Endothelial cell of umbilical vein (primary cell): ENCODE measurements at regions of chr13 and their contacts with region 1.

Region 1: DNA sequence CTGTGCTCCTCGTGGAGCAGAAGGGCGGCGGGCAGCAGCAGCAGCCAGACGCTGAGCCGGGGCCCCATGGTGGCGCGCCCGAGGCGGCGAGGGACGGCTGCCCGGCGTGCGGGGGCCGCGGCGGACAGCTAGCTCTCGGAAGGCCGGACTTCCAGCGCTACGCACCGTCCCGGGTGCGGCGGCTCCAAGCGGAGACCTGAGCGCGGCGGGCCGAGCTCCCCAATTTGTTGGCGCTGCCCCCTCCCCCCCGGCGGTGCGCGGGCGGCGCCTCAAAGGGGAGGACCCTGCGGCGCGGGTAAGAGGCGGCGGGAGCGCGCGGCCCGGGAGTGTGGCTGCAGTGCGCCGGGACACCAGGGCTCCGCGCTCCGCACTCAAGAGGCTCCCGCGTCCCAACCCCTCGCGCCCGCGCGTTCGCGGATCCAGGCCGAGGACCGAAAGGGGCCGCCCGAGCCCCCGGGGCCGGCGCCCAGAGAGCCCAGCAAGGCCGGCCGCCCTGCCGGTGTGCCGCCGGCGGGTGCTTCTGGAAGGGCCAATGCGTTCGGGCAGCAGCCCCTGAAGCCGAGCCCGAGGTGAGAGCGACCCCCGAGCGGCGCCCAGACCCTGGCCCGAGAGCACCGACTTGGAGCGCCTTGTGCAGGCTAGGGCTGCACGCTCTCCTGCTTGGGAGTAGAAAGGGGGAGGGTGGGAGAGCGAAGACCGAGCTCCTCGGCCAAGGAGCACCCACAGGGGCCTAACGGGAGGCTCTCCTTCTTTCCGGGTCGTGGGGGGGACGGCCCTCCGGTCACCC is at the starts of genes COL4A1 and COL4A2:
- DNase-seq: peak; percentile 66
- H3K4me3 ChIP-seq: peak within 1 kb of the TSS; percentile 64 to 83 (median 71)
- H3K27ac ChIP-seq: peak within 1 kb of the TSS; percentile 59
- H3K4me1 ChIP-seq: peaks cover 69% of the 10 kb centered on the region
- H3K27me3 ChIP-seq: no peaks in the 10 kb centered on the region
- CTCF ChIP-seq: no peak
- POLR2A ChIP-seq: peak; percentile 92
- total RNA-seq, gene COL4A1: 1,119 and 1,341 TPM in 2 replicates
- total RNA-seq, gene COL4A2: 792 and 935 TPM in 2 replicates

Region 2: DNA sequence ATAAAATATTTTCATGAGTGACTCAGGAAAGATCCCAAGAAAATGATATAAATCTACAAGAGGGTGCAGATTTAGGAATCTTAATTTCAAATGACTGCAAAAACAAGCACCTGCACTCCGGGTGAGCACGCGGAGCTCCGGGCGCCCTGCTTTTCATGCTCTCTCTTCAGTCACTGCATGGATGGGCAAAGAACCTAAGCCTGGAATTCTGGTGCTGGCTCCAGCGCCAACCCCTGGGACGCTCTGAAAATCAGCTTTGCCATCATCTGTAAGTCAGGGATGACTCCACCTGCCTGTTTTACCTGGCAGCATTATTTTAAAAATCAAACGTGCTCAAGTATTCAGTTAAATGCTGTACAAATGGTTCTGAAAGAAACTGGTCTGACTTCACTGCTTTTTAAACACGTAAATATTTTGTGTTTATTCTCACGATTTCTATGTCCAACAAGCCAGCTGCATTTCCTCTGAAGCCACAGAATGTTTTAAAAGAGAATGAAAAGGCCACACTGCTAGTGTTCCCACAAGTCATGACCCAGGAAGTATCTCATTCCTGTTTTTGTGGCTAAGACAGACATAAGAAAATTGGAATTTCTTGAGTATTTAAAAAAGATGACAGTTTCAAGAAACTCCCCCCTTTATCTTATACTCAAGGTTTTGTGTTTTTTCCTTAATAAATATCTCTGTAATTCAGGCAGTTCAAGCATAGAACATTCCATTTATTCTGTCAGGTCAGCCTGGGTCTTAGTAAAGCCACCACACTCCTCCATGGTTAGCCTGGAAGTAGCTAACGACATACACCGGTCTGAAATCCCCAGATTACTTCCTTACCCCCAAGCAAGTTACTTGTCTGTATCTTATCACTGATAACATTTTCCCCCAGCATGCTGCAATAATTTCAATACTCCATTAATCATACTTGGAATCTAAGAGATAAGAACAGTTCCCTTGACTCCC is 81.3 kb before region 1 on chr13:
- CTCF ChIA-PET with region 1: interaction called, 28 read pairs
- POLR2A ChIA-PET with region 1: no interaction called
- dilution Hi-C with region 1: no loop called
- intact Hi-C with region 1: loop called (anchors 1 kb)
- DNase-seq: peak; percentile 65
- H3K4me3 ChIP-seq: no peak overlapping the region
- H3K27ac ChIP-seq: peak overlapping the region; percentile 56
- H3K4me1 ChIP-seq: peaks cover 21% of the 10 kb centered on the region
- H3K27me3 ChIP-seq: no peaks in the 10 kb centered on the region
- CTCF ChIP-seq: no peak
- POLR2A ChIP-seq: no peak

Region 3: DNA sequence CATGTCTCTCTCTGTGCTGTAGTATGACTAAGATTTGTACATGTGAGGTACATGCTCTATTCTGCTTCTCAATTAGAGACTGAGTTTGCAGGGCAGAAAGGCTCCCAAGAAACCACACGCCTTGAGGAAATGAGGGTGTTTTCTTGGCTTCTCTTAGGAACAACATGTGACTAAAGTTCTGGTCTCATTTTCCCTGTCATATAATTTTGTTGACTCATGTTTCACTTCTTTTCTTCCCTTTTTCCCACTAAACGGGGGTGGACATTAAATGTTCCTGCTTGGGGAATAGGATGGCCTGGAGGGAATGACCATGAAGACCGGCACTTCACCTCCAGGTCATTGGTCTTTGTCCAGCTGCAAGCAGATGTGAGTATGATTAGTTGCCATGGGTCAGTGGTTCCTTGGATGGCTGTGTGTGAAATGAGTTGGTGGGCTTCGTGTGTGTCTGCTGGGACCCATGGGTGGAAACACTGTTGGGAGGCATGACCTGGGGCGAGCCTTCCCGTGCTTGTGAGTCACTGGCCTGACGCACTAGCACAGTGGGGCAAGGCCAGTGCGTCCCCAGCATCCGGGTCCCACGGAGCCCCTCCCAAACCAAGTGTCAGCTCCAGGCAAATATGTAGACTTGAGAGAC is 56.8 kb before region 1 on chr13:
- CTCF ChIA-PET with region 1: interaction called, 42 read pairs
- POLR2A ChIA-PET with region 1: interaction called, 4 read pairs
- dilution Hi-C with region 1: no loop called
- intact Hi-C with region 1: no loop called
- DNase-seq: peak; percentile 64
- H3K4me3 ChIP-seq: no peak overlapping the region
- H3K27ac ChIP-seq: peak overlapping the region; percentile 77
- H3K4me1 ChIP-seq: peaks cover 38% of the 10 kb centered on the region
- H3K27me3 ChIP-seq: no peaks in the 10 kb centered on the region
- CTCF ChIP-seq: no peak
- POLR2A ChIP-seq: no peak

Region 4: DNA sequence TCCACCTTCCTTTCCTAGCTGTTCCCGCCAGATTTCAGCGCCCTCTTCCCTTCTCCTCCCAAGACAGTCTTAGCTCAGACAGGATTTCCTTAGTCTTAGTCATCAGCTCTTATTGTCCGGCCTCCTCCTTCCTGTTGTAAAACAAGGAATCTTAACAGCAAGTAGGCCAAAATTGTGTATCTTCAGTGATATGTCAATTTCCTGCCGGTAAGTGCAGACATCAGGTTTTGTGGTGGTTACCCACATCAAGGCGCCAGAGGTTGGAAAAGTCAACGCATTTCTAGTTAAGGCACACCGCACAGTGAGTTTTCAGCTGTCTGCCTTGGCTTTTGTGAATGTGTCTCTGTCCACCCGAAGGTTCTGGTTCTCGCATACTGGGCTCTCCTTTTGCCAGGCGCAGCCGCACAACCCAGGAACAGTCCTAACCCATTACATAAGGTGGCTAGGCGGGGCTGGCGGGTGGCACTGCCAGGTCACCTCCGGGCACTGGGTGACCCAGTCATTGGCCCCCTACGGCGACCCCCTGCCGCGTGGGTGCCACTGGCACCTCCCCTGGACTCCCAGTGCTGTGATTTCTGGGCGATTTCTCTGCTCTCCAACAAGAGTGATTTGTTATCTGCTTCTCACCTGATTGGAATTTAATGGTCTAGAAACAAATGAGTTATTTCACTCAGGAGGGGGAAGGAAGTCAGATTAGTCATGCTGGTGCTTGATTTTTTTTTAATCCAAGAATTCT is 12.8 kb after region 1 on chr13:
- CTCF ChIA-PET with region 1: interaction called, 8 read pairs
- POLR2A ChIA-PET with region 1: interaction called, 3 read pairs
- dilution Hi-C with region 1: no loop called
- intact Hi-C with region 1: loop called (anchors 1 kb)
- DNase-seq: peak; percentile 87
- H3K4me3 ChIP-seq: peak overlapping the region in 1 of 3 experiments; percentile 30
- H3K27ac ChIP-seq: peak overlapping the region; percentile 97
- H3K4me1 ChIP-seq: peaks cover 36% of the 10 kb centered on the region
- H3K27me3 ChIP-seq: no peaks in the 10 kb centered on the region
- CTCF ChIP-seq: no peak
- POLR2A ChIP-seq: no peak

Region 5: DNA sequence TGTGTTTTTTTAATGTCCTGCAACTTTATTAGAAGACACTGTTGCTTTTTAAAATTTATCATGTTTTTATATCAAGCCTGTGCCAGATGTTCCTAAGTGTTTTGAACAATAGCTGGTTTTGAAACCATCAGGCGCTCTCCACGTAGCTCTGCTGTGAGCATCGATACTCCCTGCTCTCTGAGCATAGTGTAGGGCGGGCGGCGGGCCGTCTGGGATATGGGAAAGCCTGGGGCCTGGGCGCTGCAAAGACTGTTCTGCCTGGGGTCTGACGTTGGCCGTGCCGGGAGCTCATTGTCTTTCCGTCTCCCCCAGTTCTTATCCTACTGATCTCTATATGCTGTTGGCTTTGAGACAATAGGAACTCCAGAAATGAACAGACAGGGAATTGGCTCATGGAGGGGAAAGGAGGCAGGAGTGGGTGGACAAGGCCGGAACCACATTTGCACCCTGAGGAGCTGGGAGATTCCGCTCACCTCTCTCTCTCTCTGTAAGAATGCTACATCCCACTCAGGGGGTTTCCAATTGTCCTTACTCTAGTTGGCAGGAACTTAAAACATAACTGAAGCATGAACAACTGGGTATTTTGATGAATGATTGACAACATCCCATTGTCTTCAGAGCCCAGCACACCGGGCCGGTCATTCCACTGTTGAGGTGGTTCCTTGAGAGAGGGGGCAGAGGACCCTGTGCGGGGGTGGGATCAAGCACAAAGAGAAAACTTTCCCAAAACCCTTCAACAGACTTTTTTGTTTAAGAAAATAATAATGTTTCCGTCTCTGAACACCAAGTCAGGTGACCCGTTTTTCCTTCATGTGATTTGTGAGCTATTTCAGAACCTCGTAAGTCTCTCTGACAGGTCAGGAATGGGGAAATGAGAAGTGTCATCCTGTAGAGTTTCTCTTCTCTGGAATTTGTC is 64.7 kb after region 1 on chr13:
- CTCF ChIA-PET with region 1: no interaction called
- POLR2A ChIA-PET with region 1: no interaction called
- dilution Hi-C with region 1: no loop called
- intact Hi-C with region 1: no loop called
- DNase-seq: peak; percentile 81
- H3K4me3 ChIP-seq: no peak overlapping the region
- H3K27ac ChIP-seq: peak overlapping the region; percentile 72
- H3K4me1 ChIP-seq: peaks cover 45% of the 10 kb centered on the region
- H3K27me3 ChIP-seq: no peaks in the 10 kb centered on the region
- CTCF ChIP-seq: no peak
- POLR2A ChIP-seq: no peak